Posterior cingulate gyrus (tissue), 11 donors: ENCODE measurements at regions of chr17 and their contacts with region 1.

Region 1: DNA sequence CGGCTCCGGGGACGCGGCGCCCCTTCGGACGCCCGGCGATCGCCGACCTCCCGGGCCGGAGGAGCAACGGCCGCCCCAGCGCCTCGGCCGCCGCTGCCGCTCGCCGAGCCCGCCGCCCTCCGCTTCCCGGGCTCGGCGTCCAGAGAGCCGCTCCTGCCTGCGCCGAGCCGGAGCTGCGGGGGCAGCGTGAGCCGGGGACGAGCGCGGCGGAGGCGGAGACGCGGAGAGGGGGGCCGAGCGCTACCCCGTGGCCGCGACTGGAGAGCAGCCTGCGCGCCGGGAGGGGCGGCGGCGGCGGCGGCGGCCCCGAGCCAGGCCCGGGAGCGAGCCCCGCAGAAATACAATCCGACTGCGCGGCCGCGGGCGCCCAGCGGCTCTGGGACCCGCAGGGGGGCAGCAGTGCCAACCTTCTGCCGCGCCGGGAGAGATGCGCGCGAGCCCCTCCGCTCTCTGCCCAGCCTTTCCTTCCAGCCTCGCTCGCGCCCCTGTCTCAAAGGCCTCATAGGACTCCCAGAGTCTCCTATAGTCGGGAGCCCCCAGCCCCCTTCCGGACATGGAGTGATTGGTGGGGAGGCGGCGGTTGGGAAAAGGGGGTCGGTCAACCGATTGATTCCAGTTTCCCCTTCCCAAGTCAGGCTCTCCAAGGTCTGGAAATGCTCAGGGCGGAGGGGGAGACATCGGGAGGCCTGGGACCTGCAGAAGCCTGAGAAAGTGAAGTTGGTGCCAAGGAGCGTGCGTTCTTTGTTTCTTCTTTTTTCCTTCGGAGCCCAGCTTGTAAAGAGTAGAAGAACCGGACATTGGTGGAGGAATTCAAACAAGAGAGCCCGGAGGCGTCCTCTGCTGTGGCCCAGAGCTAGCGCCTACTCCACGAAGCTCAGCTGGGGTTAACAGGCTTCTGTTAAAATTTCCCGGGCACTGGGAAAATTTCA is 1.1 kb upstream of the SDK2 start:
- DNase-seq: peak; percentile 44 to 97 (median 72)

Region 2: GRCh38 chr17:73429440-73430164 is 215.7 kb before region 1 on chr17:
- intact Hi-C with region 1: loop called (anchors 5 kb)
- DNase-seq: peak; percentile 75 to 98 (median 90)

Region 3: DNA sequence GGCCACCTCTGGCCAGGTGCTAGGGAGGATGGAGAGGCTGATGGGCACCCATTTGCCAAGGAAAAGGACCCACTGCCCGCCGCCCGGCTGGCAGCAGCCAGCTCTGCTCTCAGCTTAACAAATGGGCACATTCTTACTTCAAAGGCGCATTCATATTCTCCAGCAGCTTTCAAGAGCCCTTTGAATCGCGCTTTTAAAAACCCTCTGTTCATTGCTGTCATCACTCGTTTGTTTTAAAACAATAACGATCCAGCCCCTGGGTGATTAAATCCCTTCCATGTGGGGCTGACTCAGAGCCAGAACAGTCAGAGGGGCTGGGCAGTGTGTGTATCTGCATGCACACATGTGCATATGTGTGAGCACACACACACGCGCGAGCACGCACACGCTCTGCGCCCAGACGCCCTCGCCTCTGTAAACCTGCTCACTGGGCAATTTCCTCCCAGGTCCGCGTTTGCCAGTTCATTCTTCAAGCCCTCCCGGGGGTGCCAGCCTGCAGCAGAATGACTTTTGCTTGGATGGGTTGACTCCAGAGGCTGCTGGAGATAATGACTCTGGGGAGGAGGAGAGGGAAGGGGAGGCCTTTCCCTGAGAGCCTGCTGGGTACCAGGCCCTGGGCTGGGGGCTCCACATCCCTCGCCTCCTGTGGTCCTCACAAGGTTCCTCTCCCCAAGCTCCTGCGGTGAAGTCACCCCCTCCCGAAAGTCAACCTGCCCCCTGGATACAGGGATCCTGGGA is 134.2 kb before region 1 on chr17:
- intact Hi-C with region 1: loop called (anchors 10 kb)
- DNase-seq: peak in 5 of 10 donors; percentile 27 to 86 (median 67)

Region 4: DNA sequence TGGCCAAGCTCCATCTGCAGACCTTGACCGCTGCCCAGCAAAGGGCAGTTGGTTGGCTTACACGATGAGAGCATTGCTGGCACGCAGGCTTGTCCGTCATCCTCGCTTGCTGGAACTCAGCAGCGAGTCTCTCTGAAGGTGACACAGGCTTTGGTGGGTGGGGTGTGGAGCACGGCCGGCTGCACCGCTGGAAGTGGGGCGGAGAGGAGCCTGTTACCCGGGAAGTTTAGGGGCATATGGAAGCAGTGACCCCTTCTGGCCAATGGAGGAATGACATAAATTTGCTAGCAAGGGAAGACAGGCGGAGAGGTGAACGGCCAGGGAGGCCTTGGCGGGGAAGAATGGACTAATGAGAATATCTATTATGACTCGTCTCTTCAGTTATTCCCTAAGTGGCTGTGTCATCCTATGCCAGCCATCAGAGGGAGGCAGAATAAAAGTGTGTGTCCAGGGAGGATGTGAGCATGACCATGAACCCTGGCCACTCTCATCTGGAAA is 64.8 kb after region 1 on chr17:
- intact Hi-C with region 1: loop called (anchors 5 kb)
- DNase-seq: peak in 5 of 10 donors; percentile 47 to 89 (median 67)

Region 5: DNA sequence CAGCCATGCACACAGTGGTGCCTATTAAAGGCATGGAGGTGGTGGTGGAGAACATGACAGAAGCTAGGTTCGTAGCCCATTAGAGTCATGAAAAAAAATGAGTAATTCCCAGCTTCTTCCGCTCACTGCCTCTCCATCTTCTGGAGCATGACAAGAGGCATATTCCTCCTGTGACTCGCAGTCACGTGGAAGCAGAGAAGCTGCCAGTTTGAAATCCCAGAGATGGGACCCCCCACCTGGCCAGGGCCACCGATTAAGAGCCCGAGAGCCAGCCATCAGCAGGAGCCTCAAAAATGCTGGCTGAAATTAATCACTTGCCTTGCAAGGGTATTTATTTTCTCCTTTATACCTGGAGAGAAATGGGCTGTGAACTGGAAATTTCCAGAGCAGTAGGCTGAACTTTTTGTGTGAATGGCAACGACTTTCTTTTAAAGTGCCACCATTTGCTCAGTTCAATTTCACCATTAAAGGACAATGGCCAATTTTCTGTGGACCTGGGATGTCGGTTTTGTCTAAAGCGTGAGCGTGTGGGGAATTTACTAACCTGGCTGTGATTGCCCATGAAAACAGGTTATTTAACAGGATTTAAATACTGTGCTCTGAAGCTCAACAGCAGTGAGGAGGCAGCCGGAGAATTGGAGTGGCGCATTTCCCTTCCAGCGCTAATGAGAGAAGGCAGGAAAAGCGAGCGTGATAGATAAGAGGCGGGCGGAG is 188.6 kb after region 1 on chr17:
- intact Hi-C with region 1: loop called (anchors 10 kb)
- DNase-seq: peak in 1 of 10 donors; percentile 54

Region 6: DNA sequence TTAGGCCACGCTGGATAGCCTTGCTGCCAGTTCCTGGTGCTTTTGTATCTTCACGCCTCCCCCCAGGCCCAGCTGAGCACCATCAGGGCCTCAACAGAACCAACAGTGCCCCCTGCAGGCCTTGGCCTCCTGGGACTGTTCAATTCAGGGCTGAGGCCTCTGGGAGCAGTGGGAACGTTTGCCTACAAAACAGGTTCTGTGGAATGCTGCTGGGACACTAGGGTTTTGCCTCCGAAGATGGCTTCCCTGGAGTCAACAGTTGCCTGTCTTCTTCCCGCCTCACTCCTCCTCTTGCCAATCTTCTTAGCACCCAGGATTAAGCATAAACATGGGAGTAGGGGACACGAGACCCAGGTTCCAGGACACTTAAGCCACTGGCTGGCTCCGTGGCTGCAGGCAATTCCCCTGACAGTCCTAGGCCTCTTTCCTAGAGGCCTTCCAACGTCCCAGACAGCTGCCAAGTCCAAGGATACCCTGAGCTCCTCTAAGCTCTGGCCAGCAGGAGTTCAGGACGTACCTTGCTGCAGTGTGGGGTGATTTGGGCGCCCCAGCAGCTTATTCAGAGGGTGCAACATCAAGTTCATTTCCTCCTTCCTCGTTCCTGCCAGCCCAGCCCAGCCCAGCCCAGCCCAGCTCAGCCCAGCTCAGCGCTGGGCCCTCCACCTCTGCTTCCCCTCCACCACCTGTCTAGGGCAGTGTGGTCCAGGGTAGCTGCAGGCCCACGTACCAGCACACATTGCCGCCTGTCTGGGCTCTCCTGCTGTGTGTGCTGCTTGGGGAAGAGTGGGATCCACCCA is 311.6 kb after region 1 on chr17:
- intact Hi-C with region 1: loop called (anchors 5 kb)
- DNase-seq: peak; percentile 47 to 96 (median 84)

Region 7: GRCh38 chr17:74176546-74177001 is 531.3 kb after region 1 on chr17:
- intact Hi-C with region 1: loop called (anchors 10 kb)
- DNase-seq: peak; percentile 57 to 95 (median 76)